PC-9 (cell line): ENCODE measurements at regions of chr9 and their contacts with region 1.

Region 1: GRCh38 chr9:132973713-132974112 is 4.8 kb upstream of the GFI1B start:
- DNase-seq: no peak
- H3K4me3 ChIP-seq: no peak overlapping the region
- H3K27ac ChIP-seq: no peak overlapping the region
- H3K4me1 ChIP-seq: no peaks in the 10 kb centered on the region
- H3K27me3 ChIP-seq: peaks cover 56% of the 10 kb centered on the region
- CTCF ChIP-seq: no peak

Region 2: GRCh38 chr9:132507746-132508469 is 465.8 kb before region 1 on chr9:
- CTCF ChIA-PET with region 1: no interaction called
- POLR2A ChIA-PET with region 1: no interaction called
- intact Hi-C with region 1: loop called (anchors 1 kb)
- DNase-seq: peak in 1 of 2 experiments; percentile 67
- H3K4me3 ChIP-seq: no peak overlapping the region
- H3K27ac ChIP-seq: no peak overlapping the region
- H3K4me1 ChIP-seq: no peaks in the 10 kb centered on the region
- H3K27me3 ChIP-seq: peaks cover 85% of the 10 kb centered on the region
- CTCF ChIP-seq: peak; percentile 87

Region 3: GRCh38 chr9:132810314-132810713 is 163.4 kb before region 1 on chr9:
- CTCF ChIA-PET with region 1: no interaction called
- POLR2A ChIA-PET with region 1: no interaction called
- intact Hi-C with region 1: no loop called
- DNase-seq: no peak
- H3K4me3 ChIP-seq: no peak overlapping the region
- H3K27ac ChIP-seq: no peak overlapping the region
- H3K4me1 ChIP-seq: 0 out of 2 replicates have a peak, but pooled peaks cover 4% of the 10 kb centered on the region
- H3K27me3 ChIP-seq: peaks cover 1% of the 10 kb centered on the region; the same call in 1 of the 2 replicates
- CTCF ChIP-seq: no peak

Region 4: GRCh38 chr9:133023117-133023890 is 49.6 kb after region 1 on chr9:
- CTCF ChIA-PET with region 1: interaction called, 5 read pairs
- POLR2A ChIA-PET with region 1: no interaction called
- intact Hi-C with region 1: loop called (anchors 1 kb)
- DNase-seq: peak in 1 of 2 experiments; percentile 12
- H3K4me3 ChIP-seq: no peak overlapping the region
- H3K27ac ChIP-seq: no peak overlapping the region
- H3K4me1 ChIP-seq: no peaks in the 10 kb centered on the region
- H3K27me3 ChIP-seq: peaks cover 8% of the 10 kb centered on the region
- CTCF ChIP-seq: no peak

Region 5: GRCh38 chr9:133054966-133055365 is 81.3 kb after region 1 on chr9:
- CTCF ChIA-PET with region 1: no interaction called
- POLR2A ChIA-PET with region 1: no interaction called
- intact Hi-C with region 1: no loop called
- DNase-seq: no peak
- H3K4me3 ChIP-seq: no peak overlapping the region
- H3K27ac ChIP-seq: no peak overlapping the region
- H3K4me1 ChIP-seq: no peaks in the 10 kb centered on the region
- H3K27me3 ChIP-seq: no peaks in the 10 kb centered on the region
- CTCF ChIP-seq: no peak